Stomach (tissue), 19 donors: ENCODE measurements at regions of chr6 and their contacts with region 1.

Region 1: DNA sequence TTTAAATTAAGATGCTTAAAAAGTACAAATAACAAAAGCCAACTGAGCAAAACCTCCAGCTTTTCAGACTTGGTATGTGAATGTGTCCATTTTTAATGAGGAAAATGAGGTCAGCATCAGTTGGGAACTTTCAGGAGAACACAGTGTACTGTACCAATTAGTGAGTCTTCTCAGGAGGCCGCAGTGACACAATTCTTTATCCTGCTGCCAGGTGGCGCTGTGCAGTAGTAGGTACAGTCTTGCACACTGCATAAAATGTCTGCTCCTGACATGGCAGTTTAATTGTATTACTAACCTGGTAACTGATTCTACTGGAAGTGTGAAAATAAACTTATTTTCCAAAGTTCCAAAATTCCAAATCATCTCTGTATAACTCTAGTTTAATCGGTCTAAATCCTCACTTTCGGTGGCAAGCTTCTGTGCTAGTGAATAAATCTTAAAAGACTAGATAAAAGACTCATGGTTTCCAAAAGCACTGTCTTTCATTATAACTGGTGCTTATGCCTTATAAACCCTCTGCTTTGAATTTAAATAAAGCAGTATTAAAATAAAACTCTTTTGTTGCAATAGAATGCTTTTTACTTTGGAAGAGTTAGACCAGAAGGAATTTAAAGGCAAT is 214.8 kb upstream of the MMS22L start:
- DNase-seq: peak; percentile 62 to 87
- H3K4me3 ChIP-seq: no peak overlapping the region
- H3K27ac ChIP-seq: no peak overlapping the region
- H3K4me1 ChIP-seq: no peaks in the 10 kb centered on the region
- H3K27me3 ChIP-seq: peaks cover 0 to 5% (median 0%) of the 10 kb centered on the region in 3 donors
- CTCF ChIP-seq: peak in 5 of 7 experiments; percentile 32 to 76 (median 69)
- EP300 ChIP-seq: no peak
- POLR2A ChIP-seq: no peak

Region 2: GRCh38 chr6:97294451-97294850 is 203.4 kb before region 1 on chr6:
- intact Hi-C with region 1: no loop called
- DNase-seq: no peak
- H3K4me3 ChIP-seq: no peak overlapping the region
- H3K27ac ChIP-seq: no peak overlapping the region
- H3K4me1 ChIP-seq: no peaks in the 10 kb centered on the region
- H3K27me3 ChIP-seq: peaks cover 0 to 4% (median 0%) of the 10 kb centered on the region in 3 donors
- CTCF ChIP-seq: no peak
- EP300 ChIP-seq: no peak
- POLR2A ChIP-seq: no peak

Region 3: DNA sequence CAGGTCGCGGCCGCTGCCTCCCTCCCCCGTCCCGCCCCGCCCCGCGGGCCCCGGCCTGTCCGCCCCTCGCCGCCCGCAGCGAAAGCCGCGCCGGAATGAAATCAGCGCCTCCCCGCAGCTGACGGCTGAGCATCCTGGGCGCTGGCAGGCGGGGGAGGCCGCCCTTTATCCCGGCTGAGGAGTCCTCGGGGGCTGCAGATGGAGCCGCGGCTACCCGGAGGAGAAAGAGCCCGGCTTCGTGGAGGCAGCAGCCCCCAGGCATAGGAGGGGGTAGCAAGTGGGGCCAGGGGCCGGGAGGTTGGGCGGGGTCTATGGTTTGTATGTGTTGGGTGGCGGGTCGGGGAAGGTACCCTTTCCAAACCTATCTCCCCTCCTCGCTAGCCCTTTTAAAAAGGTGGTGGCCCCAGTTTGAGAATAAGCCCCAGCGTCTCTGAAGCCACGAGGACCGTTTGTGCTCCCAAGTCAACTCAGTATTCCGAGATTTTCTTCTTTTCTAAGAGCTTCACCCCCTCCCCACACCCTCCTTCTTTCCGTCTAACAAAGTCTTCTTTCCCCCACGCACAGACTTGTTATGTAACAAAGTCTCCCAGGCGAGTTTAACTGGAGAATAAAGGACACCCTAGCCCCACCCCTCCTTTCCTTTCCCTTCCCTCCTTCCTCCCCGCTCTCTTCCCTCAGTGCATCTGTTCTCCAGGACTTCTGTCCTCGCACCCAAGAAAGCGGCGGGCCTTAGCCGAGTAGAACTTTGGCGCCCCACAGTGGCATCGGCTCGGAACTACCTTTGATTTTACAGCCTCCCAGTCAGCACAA is 1347.6 kb after region 1 on chr6:
- intact Hi-C with region 1: loop called (anchors 10 kb)
- DNase-seq: peak; percentile 74 to 93
- H3K4me3 ChIP-seq: peak overlapping the region; percentile 14 to 52 (median 32)
- H3K27ac ChIP-seq: no peak overlapping the region
- H3K4me1 ChIP-seq: peaks cover 25 to 56% (median 41%) of the 10 kb centered on the region in 4 donors
- H3K27me3 ChIP-seq: peaks cover 34 to 91% (median 86%) of the 10 kb centered on the region in 3 donors
- CTCF ChIP-seq: peak in 5 of 7 experiments; percentile 61 to 83 (median 69)
- EP300 ChIP-seq: no peak
- POLR2A ChIP-seq: no peak

Region 4: GRCh38 chr6:99119109-99120031 is 1621.5 kb after region 1 on chr6:
- intact Hi-C with region 1: loop called (anchors 10 kb)
- DNase-seq: peak in 1 of 2 donors; percentile 63
- H3K4me3 ChIP-seq: no peak overlapping the region
- H3K27ac ChIP-seq: no peak overlapping the region
- H3K4me1 ChIP-seq: no peaks in the 10 kb centered on the region
- H3K27me3 ChIP-seq: peaks cover 0 to 10% (median 3%) of the 10 kb centered on the region in 3 donors
- CTCF ChIP-seq: peak in 5 of 7 experiments; percentile 21 to 63 (median 59)
- EP300 ChIP-seq: no peak
- POLR2A ChIP-seq: no peak